ENCODE measurements at regions of chr12 and their contacts with region 1.

Region 1: DNA sequence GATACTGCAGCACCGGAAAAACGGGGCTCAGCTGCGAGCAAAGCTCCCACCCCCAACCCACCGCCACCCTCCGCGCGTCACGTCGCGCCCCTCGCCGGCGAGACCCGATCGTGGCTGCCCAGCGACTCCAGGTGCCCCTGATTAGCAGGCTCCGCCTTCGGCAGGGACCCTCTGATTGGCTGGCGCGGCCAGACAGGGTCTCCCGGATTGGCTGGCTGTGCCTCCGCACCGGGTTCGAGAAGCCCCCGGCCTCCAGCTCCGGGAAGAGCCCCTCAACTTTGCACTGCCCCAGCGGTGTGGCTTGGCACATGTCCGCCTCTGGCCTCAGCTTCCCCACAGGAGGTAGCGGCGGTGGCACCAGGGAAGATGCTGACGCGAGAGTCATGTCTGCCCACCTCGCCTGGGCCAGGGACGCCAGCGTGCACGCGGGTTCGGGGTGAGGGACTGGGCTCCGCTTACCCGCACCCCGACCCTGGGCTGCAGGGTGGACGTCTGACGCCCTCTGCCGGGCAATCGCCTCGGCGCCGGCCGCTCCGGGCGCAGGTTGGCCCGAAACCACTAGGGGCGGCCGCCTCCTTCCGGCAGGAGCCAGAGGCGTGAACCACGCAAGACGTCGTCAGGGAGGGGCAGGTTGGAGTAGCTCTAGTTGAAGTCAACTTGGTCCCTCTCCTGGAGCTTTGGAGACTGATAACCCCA is 498 bp upstream of the RHOF start:
- DNase-seq: peak; percentile 92 to 96 (median 93)
- H3K4me3 ChIP-seq: peak overlapping the region in 2 of 4 donors; percentile 33 to 60
- H3K27ac ChIP-seq: peak overlapping the region; percentile 29 to 100 (median 100)
- H3K4me1 ChIP-seq: peaks cover 52 to 65% of the 10 kb centered on the region in 2 donors
- H3K27me3 ChIP-seq: no peaks in the 10 kb centered on the region
- CTCF ChIP-seq: peak; percentile 97 to 100 (median 100)
- POLR2A ChIP-seq: peak; percentile 24 to 26

Region 2: GRCh38 chr12:121697098-121697698 is 96.8 kb before region 1 on chr12:
- intact Hi-C with region 1: loop called in 1 of 2 experiments (anchors 5 kb)
- DNase-seq: peak in 1 of 7 donors; percentile 44
- H3K4me3 ChIP-seq: no peak overlapping the region
- H3K27ac ChIP-seq: no peak overlapping the region
- H3K4me1 ChIP-seq: no peaks in the 10 kb centered on the region
- H3K27me3 ChIP-seq: no peaks in the 10 kb centered on the region
- CTCF ChIP-seq: peak; percentile 55 to 82 (median 70)
- POLR2A ChIP-seq: no peak

Region 3: GRCh38 chr12:121773011-121773777 is 20.8 kb before region 1 on chr12:
- intact Hi-C with region 1: loop called in 1 of 2 experiments (anchors 2 kb)
- DNase-seq: peak; percentile 67 to 87 (median 80)
- H3K4me3 ChIP-seq: no peak overlapping the region
- H3K27ac ChIP-seq: peak overlapping the region in 1 of 5 donors; percentile 4
- H3K4me1 ChIP-seq: peaks cover 9 to 16% of the 10 kb centered on the region in 2 donors
- H3K27me3 ChIP-seq: no peaks in the 10 kb centered on the region
- CTCF ChIP-seq: peak; percentile 64 to 95 (median 92)
- POLR2A ChIP-seq: no peak

Region 4: DNA sequence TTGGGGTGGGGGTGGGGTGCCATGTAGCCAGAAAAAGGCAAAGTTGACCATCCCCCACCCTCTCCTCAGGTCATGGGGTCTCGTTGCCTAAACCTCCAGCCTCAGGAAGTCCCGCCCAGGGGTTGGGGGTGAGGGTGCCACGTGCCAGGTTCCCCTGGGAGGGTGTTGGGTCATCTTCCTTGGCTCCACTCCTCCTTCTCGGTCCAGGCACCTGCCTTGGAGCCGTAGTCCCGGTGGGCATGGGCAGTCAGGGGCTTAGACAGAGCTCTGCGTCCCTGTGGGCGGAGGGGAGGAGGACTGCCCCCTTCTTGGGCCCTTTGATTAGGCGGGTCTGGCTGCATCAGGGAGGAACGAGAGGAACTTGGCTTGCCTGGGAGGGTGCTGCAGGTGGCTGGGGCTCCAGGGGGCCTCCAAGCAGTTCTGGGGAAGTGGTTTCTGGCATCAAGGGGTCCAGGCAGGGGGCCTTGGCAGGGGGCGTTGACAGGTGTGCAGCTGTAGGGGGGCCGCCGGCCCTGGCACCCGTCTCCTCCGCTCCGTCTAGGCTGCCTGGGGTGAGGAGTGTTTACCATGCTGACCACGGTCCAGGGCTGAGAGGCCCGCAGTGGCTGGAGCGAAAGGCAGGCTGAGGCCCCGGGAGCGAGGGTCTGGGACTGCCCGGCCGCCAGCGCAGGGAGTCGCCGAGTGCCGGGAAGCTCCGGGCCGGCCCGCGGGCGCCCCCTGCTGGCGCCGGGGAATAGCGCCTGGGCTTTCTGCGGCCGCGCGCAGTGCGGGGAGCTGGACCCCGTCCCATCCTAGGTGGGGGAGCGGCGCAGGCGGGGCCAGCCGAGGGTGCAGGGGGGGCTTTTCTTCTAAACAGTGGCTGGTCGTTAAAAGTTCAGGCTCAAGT is 17.7 kb after region 1 on chr12:
- intact Hi-C with region 1: loop called in 1 of 2 experiments (anchors 2 kb)
- DNase-seq: peak; percentile 71 to 84 (median 79)
- H3K4me3 ChIP-seq: peak overlapping the region in 3 of 4 donors; percentile 7 to 49 (median 32)
- H3K27ac ChIP-seq: peak overlapping the region; percentile 43 to 85 (median 75)
- H3K4me1 ChIP-seq: peaks cover 25 to 43% of the 10 kb centered on the region in 2 donors
- H3K27me3 ChIP-seq: no peaks in the 10 kb centered on the region
- CTCF ChIP-seq: peak; percentile 75 to 100 (median 92)
- POLR2A ChIP-seq: no peak

Region 5: DNA sequence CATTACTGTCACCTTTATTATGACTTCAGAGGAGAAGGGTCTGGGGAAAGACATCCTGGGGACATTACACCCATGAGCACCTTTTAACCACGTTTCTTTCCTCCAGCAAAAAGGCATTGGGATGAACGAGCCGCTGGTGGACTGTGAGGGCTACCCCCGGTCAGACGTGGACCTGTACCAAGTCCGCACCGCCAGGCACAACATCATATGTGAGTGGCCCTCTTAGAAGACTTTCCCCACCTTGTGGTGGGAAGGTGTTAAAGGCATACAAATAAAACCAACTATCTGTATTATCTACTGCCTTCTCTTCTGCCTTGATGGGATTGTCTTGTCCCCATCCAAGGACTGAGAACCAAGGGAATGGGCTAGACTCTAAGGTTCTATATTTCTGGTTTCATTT is 100.6 kb after region 1 on chr12:
- intact Hi-C with region 1: loop called (anchors 5 to 10 kb)
- DNase-seq: no peak
- H3K4me3 ChIP-seq: no peak overlapping the region
- H3K27ac ChIP-seq: no peak overlapping the region
- H3K4me1 ChIP-seq: peaks cover 21 to 36% of the 10 kb centered on the region in 2 donors
- H3K27me3 ChIP-seq: no peaks in the 10 kb centered on the region
- CTCF ChIP-seq: no peak
- POLR2A ChIP-seq: no peak

Region 6: GRCh38 chr12:121980191-121980891 is 186.4 kb after region 1 on chr12:
- intact Hi-C with region 1: no loop called
- DNase-seq: peak in 1 of 7 donors; percentile 4
- H3K4me3 ChIP-seq: no peak overlapping the region
- H3K27ac ChIP-seq: no peak overlapping the region
- H3K4me1 ChIP-seq: no peaks in the 10 kb centered on the region
- H3K27me3 ChIP-seq: no peaks in the 10 kb centered on the region
- CTCF ChIP-seq: no peak
- POLR2A ChIP-seq: no peak

Region 7: DNA sequence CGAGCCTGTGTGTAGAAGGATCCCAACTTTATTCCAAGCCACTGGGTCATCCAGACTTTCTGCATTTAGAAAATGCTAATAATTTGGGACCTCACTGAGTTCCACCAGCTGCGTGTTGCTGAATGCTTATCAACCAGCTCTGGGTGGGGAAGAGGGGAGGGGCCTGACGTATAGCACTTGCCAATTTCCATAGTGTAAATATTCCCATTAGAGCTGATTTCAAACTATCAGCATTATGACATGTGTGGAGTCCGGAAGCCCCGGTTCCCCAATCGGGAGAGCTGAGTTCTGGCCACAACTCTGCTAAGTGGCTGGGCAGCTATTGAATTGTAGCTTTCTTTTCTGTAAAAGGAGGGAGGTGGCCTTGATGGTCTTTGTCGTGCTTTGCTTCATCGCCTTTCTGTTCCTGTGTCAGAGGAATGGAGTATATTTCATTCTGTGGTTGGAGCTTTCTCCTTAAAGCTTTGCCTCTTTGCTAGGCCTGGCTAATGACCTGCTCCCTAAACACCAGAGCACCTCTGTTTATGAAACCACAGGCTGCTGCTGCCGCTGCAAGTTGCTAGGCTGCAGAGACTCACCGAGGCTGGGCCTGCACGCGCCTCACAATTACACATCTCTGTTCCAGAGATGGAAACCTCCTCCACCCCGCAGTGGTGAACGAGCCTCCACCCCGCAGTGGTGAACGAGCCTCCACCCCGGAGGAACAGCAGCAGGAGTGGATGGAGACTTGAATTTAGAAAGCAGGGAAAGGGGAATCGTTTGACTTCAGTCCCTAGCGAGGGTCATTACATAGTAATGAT is 220.0 kb after region 1 on chr12:
- intact Hi-C with region 1: no loop called
- DNase-seq: no peak
- H3K4me3 ChIP-seq: no peak overlapping the region
- H3K27ac ChIP-seq: no peak overlapping the region
- H3K4me1 ChIP-seq: no peaks in the 10 kb centered on the region
- H3K27me3 ChIP-seq: no peaks in the 10 kb centered on the region
- CTCF ChIP-seq: no peak
- POLR2A ChIP-seq: no peak